Right lobe of liver (tissue), 6 donors: ENCODE measurements at regions of chr2 and their contacts with region 1.

Region 1: GRCh38 chr2:130181325-130181879 is at the start of gene SMPD4:
- DNase-seq: peak; percentile 97 to 98 (median 97)
- ATAC-seq: peak; percentile 89 to 94 (median 92)
- H3K4me3 ChIP-seq: peak within 1 kb of the TSS; percentile 69 to 99 (median 98)
- H3K27ac ChIP-seq: peak within 1 kb of the TSS; percentile 74 to 88 (median 83)
- H3K4me1 ChIP-seq: peaks cover 0 to 8% (median 4%) of the 10 kb centered on the region in 4 donors
- H3K27me3 ChIP-seq: no peaks in the 10 kb centered on the region
- CTCF ChIP-seq: no peak
- POLR2A ChIP-seq: peak; percentile 30
- total RNA-seq, gene SMPD4: 19.0 to 24.3 (median 21.6) TPM

Region 2: GRCh38 chr2:129885736-129886135 is 295.7 kb before region 1 on chr2:
- intact Hi-C with region 1: no loop called
- DNase-seq: no peak
- ATAC-seq: peak in 1 of 4 donors; percentile 14
- H3K4me3 ChIP-seq: no peak overlapping the region
- H3K27ac ChIP-seq: no peak overlapping the region
- H3K4me1 ChIP-seq: no peaks in the 10 kb centered on the region
- H3K27me3 ChIP-seq: no peaks in the 10 kb centered on the region
- CTCF ChIP-seq: no peak
- POLR2A ChIP-seq: no peak

Region 3: DNA sequence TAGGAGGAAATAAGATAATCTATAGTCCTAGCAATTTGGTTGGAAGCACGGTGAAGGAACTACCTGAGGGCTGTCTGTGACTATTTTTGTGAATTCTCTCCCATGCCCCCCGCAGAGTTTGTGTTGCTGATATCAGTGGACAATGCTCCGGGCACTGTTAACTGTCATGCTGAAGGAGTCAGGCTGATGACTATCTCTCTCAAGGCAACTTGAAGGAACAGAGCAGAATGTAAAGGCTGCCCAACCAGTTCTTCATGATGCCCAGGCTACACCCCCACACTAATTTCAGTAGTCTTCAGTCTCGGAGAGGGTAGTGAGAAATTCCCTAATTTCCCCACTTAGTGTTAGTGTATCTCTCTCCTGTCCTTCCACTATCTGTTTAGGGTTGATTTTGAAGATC is 223.5 kb before region 1 on chr2:
- intact Hi-C with region 1: no loop called
- DNase-seq: no peak
- ATAC-seq: no peak
- H3K4me3 ChIP-seq: no peak overlapping the region
- H3K27ac ChIP-seq: no peak overlapping the region
- H3K4me1 ChIP-seq: no peaks in the 10 kb centered on the region
- H3K27me3 ChIP-seq: no peaks in the 10 kb centered on the region
- CTCF ChIP-seq: no peak
- POLR2A ChIP-seq: no peak

Region 4: DNA sequence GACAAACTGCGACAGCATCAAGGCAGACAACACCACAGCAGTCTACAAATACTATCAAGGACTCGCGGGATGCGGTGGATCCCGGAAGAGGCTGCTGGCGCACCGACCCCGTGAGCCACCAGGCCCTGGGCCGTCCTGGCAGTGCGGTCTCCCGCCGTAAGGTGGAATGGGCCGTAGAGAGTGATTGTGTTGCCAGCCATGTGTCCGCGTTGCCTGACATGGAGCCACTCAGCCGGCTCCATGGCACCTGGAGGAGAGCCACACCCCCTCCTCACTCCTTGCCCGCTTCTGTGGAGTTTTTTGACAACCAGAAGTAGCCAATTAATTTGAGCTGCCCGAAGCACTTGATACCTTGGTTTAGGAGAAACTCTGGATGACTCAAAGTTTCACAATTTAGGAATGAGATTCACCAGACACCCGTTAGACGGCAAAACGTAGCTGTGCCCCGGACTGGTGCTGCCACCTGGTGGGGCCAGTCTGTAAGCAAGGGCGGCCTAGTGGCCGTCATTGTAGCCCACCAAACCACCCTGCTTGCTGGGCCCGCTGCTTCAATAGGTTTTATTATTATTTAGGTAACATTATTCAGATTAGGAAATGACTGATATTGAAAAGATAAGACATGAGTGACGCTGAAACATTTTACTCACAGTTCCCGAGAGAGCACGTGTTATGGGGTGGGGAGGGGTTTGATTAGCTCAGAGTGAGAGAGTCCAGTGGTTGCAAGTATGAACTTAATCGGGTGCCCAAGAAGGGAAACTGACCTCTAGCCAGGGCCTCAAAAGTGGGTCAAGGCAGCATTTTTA is 151.1 kb after region 1 on chr2:
- intact Hi-C with region 1: loop called in 1 of 2 experiments (anchors 10 kb)
- DNase-seq: peak; percentile 68 to 78 (median 75)
- ATAC-seq: peak; percentile 87 to 96 (median 90)
- H3K4me3 ChIP-seq: no peak overlapping the region
- H3K27ac ChIP-seq: no peak overlapping the region
- H3K4me1 ChIP-seq: peaks cover 0 to 3% (median 0%) of the 10 kb centered on the region in 4 donors
- H3K27me3 ChIP-seq: no peaks in the 10 kb centered on the region
- CTCF ChIP-seq: peak; percentile 85 to 96 (median 96)
- POLR2A ChIP-seq: no peak